SK-N-SH (cell line): ENCODE measurements at regions of chr13 and their contacts with region 1.

Region 1: DNA sequence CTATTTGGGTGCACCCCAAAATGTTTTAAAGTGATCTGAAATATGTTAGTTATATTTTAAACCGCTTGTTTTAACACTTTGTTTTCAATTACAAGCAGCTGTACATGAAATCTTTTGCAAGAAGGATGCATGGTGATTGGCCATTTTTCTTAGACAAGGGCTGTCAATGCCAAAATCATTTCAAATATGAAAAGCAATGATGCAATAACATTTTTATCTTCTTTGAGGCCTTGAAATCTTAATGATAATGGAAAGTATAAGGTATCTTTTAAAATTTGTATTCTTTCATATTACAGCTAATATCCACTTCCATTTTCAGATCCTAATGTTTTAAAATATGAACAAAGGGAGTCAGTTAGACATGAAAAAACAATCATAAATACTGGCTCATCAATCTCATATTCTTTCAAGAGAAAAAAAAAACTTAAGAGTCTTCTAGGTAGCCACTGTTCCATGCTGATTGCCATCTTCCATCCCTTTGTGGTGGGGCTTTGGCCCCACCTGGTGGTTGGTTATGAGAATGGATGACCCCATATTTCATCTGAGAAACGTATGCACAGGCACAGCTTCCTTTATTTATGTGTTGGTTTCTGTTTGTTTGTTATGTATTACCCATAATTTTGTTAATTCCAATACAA is 330.3 kb upstream of the MIR17HG start:
- DNase-seq: peak; percentile 67
- H3K4me3 ChIP-seq: peak overlapping the region in 1 of 2 experiments; percentile 24; a peak in 1 of 4 replicates
- H3K27ac ChIP-seq: no peak overlapping the region
- H3K4me1 ChIP-seq: no peaks in the 10 kb centered on the region
- H3K27me3 ChIP-seq: no peaks in the 10 kb centered on the region
- CTCF ChIP-seq: peak; percentile 81
- EP300 ChIP-seq: no peak
- RAD21 ChIP-seq: peak; percentile 91

Region 2: DNA sequence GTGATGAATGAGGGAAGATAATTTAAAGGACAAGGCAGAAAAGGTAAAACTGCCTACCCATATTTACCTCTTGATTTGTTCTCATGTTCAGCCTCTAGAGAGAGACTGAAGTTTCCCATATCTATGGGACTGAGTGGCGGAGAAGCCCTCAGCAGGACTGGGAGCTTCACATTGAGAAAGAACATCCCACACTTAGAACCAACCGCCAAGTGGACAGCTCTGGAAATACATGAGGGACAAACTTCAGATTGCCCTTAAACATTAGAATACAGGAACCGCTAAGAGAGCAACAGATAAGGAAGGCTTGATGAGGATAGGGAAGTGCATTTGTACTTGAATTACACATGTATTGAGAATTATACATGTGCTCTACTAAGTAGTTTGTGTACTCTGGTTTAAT is 14.4 kb after region 1 on chr13:
- CTCF ChIA-PET with region 1: interaction called, 10 read pairs
- POLR2A ChIA-PET with region 1: no interaction called
- DNase-seq: no peak
- H3K4me3 ChIP-seq: no peak overlapping the region
- H3K27ac ChIP-seq: no peak overlapping the region
- H3K4me1 ChIP-seq: no peaks in the 10 kb centered on the region
- H3K27me3 ChIP-seq: no peaks in the 10 kb centered on the region
- CTCF ChIP-seq: no peak; the same call in 1 of the 2 replicates
- EP300 ChIP-seq: no peak
- RAD21 ChIP-seq: no peak

Region 3: GRCh38 chr13:91042870-91043269 is 25.7 kb after region 1 on chr13:
- CTCF ChIA-PET with region 1: interaction called, 14 read pairs
- POLR2A ChIA-PET with region 1: no interaction called
- DNase-seq: no peak
- H3K4me3 ChIP-seq: no peak overlapping the region
- H3K27ac ChIP-seq: no peak overlapping the region
- H3K4me1 ChIP-seq: no peaks in the 10 kb centered on the region; a peak in 1 of 4 replicates
- H3K27me3 ChIP-seq: no peaks in the 10 kb centered on the region
- CTCF ChIP-seq: no peak
- EP300 ChIP-seq: no peak
- RAD21 ChIP-seq: no peak

Region 4: GRCh38 chr13:91369441-91369831 is 352.3 kb after region 1 on chr13:
- CTCF ChIA-PET with region 1: no interaction called
- POLR2A ChIA-PET with region 1: no interaction called
- DNase-seq: no peak
- H3K4me3 ChIP-seq: no peak overlapping the region
- H3K27ac ChIP-seq: no peak overlapping the region
- H3K4me1 ChIP-seq: no peaks in the 10 kb centered on the region
- H3K27me3 ChIP-seq: no peaks in the 10 kb centered on the region
- CTCF ChIP-seq: no peak
- EP300 ChIP-seq: 0 out of 4 replicates have a peak, but pooled peaks of 1 of the 2 experiments have one; percentile 6
- RAD21 ChIP-seq: no peak